ENCODE measurements at regions of chr13 and their contacts with region 1.

Region 1: DNA sequence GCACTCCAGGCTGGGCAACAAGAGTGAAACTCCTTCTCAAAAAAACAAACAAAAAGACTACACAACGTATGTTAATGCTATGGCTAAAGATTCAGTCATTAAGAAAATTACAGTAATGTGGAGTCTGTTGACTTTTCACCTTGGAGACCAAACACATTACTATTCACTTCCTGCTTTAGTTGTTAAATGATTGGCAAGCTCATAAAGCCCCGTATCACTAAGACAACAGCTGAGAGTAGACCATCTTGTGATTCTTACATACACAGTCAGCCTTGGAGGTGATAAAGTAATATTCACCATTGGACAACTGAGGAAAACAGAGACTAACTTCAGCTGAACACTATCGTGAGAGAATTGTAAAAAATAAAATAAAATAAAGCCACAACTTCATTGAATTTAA is 86.5 kb downstream of the KCTD12 start:
- DNase-seq: no peak
- H3K4me3 Mint-ChIP-seq: no peak overlapping the region
- H3K27ac Mint-ChIP-seq: no peak overlapping the region
- H3K4me1 Mint-ChIP-seq: no peaks in the 10 kb centered on the region
- H3K27me3 Mint-ChIP-seq: no peaks in the 10 kb centered on the region
- CTCF ChIP-seq: no peak

Region 2: GRCh38 chr13:76813000-76813691 is 13.4 kb after region 1 on chr13:
- CTCF ChIA-PET with region 1: interaction called, 10 read pairs
- POLR2A ChIA-PET with region 1: no interaction called
- intact Hi-C with region 1: no loop called
- DNase-seq: peak; percentile 28
- H3K4me3 Mint-ChIP-seq: no peak overlapping the region
- H3K27ac Mint-ChIP-seq: no peak overlapping the region
- H3K4me1 Mint-ChIP-seq: no peaks in the 10 kb centered on the region
- H3K27me3 Mint-ChIP-seq: peaks cover 5% of the 10 kb centered on the region
- CTCF ChIP-seq: no peak

Measured in MCF 10A (cell line).